H1 (cell line): ENCODE measurements at regions of chr7 and their contacts with region 1.

Region 1: DNA sequence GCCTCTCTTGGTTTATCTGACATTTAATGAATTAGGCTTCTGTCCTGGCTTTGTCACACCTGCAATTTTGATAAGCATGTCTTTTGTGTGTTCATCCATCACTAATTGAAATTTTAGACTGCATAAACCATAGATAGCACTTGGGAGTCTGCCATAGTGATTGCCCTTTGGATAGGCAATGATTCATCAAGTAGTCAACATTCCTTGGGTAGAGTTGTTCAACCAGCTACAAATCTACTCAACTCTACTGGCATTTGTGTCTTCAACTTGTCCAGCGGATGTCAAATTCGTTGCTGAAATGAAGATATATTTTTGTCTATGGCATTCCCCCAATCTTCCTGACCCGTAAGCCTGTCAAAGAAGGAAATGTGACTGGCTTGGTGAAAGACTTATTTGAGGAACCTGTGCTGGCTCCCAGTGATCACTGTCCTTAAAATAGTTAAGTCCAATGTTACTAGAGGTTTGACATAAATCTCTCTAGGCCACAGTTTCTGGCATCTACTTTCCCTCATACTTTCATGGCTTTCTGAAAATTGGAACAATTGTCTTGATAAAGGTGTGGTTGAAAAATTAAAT is 33.7 kb upstream of the CREB5 start:
- DNase-seq: no peak
- H3K4me3 ChIP-seq: no peak overlapping the region
- H3K27ac ChIP-seq: no peak overlapping the region
- H3K4me1 ChIP-seq: no peaks in the 10 kb centered on the region
- H3K27me3 ChIP-seq: no peaks in the 10 kb centered on the region
- CTCF ChIP-seq: no peak
- EP300 ChIP-seq: no peak
- POLR2A ChIP-seq: no peak
- RAD21 ChIP-seq: no peak

Region 2: DNA sequence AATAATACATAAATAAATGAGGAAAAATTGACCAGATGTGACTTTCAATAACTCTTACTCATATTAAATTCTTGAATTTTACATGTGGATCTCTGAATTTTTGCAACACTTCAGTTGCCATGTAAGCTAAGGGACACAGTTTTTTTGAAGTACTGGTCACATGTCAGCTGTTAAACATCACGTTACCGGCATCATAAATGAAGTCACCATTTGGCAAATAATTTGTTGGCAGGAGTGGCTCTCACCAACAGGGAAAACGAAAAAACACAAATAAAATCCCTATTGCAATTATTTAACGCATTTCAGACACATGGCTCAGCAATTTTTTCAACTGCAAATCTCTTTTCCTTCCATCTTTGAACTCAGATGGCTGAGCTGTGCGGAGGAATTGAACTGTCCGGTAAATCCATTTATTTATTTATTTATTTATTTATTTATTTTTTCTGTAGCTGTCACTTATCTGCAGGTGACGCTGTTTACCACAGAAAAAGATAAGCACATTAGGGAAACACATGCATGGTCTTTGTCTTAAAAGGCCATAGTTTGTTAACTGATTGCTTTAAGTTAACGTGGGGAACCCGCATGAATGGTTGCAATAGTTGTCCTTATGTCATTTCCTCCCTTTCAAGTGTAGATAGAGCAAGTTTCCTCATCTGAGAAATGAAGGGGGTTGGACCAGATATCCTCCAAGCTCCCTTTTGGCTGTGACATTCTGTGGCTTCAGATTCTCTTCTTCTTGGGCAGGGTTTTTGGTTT is 133.4 kb before region 1 on chr7:
- CTCF ChIA-PET with region 1: no interaction called
- POLR2A ChIA-PET with region 1: no interaction called
- DNase-seq: no peak
- H3K4me3 ChIP-seq: no peak overlapping the region
- H3K27ac ChIP-seq: no peak overlapping the region
- H3K4me1 ChIP-seq: peaks cover 0 to 7% (median 0%) of the 10 kb centered on the region in 4 experiments; a peak in 1 of 7 replicates
- H3K27me3 ChIP-seq: no peaks in the 10 kb centered on the region
- CTCF ChIP-seq: no peak; a peak in 1 of 4 replicates
- EP300 ChIP-seq: no peak
- POLR2A ChIP-seq: no peak
- RAD21 ChIP-seq: peak; percentile 40; a peak in 3 of 4 replicates

Region 3: GRCh38 chr7:28389504-28390395 is 11.1 kb after region 1 on chr7:
- CTCF ChIA-PET with region 1: interaction called, 10 read pairs
- POLR2A ChIA-PET with region 1: no interaction called
- DNase-seq: no peak
- H3K4me3 ChIP-seq: peak overlapping the region in 1 of 4 experiments; percentile 38; a peak in 1 of 8 replicates
- H3K27ac ChIP-seq: no peak overlapping the region
- H3K4me1 ChIP-seq: no peaks in the 10 kb centered on the region
- H3K27me3 ChIP-seq: no peaks in the 10 kb centered on the region
- CTCF ChIP-seq: peak in 2 of 3 experiments; percentile 36 to 48; a peak in 2 of 4 replicates
- EP300 ChIP-seq: no peak
- POLR2A ChIP-seq: no peak
- RAD21 ChIP-seq: peak; percentile 65 to 71